Activated T-helper 2 cell treated with anti-CD3 and anti-CD28 coated beads, Interferon-gamma antibody, Interleukin-2, Interleukin-4, amounts not matched to agents 10 μg/mL and 5 μg/mL and 100 μg/mL, durations not matched to agents 14 hours and 24 hours and 36 hours (primary cell): ENCODE measurements at regions of chr15 and their contacts with region 1.

Region 1: DNA sequence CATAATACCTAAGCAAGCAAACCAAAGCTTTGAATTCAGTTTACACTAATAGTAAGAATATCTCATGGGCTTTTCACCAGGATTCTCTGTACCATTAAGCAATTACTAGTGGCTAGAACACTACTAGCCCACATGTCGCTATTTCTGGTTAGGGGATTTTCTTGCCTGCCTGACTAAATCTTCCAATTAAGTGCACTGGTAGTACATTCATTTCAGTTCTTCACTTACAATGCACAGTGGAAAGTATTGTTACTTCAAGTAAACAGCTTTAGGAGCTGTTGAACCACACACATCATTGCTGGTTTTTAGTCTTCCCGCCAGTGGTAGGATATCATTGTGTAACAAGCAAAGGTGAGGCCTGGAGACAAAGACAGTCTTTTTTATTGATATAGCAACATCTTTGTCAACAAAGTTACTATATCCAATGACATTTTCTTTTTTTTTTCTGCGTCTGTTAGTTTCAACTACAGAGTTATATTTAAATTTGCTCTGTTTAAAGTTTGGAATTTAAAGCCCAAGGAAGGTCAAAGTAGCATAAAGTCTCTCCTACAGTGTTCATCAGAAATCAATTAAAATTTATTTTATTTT is 826.8 kb upstream of the NR2F2 start:
- DNase-seq: no peak
- H3K4me3 Mint-ChIP-seq: no peak overlapping the region
- H3K27ac Mint-ChIP-seq: no peak overlapping the region
- H3K4me1 Mint-ChIP-seq: peaks cover 21% of the 10 kb centered on the region
- H3K27me3 Mint-ChIP-seq: no peaks in the 10 kb centered on the region

Region 2: DNA sequence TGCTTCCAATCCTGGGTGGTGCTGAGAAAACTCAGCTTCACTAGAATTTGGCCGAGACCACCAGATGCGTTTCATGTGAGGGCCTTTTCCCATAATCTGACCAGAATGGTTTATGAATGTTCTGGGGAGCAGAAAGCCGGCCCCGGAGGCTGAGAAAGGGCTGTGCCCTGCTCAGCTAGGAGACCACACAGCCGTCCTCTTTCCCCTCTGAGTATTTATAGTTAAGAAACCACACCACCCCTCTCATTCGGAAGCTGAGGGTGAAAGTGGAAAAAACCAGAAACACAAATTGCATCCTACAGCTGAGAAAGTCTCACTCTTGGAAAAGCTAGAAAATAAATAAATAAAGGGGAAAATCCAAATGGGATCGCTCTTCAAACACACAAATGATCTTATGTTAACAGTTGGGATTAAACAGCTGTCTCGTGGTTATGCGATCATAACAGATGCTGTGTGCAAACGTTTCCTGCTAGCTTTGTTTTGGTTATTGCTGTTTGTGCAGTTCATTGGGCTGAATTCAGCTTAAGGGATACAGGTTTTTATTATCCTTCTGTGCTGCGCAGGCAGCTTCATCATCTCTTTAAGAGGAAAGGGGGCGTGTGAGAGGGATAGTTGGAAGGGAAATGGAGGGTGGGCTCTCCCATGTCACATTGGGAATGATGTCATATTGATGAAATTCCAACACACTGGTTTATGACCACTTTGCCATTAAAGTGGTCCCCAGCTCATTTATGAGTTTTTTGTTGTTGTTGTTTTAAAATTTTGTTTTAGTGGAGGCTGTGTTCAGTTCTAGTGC is 199.4 kb before region 1 on chr15:
- intact Hi-C with region 1: loop called (anchors 5 kb)
- DNase-seq: no peak
- H3K4me3 Mint-ChIP-seq: peak overlapping the region; percentile 19
- H3K27ac Mint-ChIP-seq: no peak overlapping the region
- H3K4me1 Mint-ChIP-seq: peaks cover 30% of the 10 kb centered on the region
- H3K27me3 Mint-ChIP-seq: peaks cover 40% of the 10 kb centered on the region

Region 3: GRCh38 chr15:95446854-95447253 is 56.9 kb before region 1 on chr15:
- intact Hi-C with region 1: loop called (anchors 5 kb)
- DNase-seq: peak; percentile 33
- H3K4me3 Mint-ChIP-seq: peak overlapping the region; percentile 4
- H3K27ac Mint-ChIP-seq: peak overlapping the region; percentile 64
- H3K4me1 Mint-ChIP-seq: peaks cover 30% of the 10 kb centered on the region
- H3K27me3 Mint-ChIP-seq: no peaks in the 10 kb centered on the region

Region 4: DNA sequence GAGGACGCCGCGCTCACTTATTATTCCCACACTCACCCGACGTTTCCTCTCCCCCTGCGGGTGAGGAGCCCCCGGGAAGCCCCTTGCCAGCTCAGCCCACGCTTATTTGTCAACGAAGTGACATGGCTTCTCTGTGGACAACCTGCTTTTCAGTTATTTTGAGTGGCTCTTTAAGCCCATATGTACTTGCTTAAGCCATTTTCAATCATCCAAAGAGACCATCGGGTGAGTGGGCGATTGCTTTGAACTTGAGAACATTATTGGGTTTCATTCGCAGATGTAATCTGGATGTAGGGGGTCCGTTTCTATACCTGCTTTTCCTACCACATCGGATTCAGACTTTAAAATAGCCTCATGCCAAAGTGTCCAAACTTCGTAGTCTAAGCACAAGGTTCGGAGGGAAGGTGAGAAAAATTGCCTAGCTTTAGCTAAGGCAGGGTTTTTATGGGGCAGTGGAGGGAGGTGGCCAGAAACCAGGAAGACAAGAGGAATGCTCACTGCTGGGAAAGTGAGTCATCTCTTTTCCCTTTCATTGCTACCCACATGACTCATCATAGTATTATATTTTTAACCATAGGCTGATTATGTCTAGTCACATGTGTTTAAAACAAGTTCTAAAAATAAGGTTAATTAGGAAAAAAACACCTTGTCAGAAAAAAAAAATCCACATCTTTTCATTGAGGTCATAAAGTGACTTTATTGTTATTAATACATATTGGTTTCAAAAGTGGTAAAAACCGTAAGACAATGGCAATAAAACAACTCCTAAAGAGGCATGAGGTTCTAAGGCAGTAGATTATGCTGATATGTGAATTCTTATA is 53.7 kb after region 1 on chr15:
- intact Hi-C with region 1: loop called (anchors 5 kb)
- DNase-seq: no peak
- H3K4me3 Mint-ChIP-seq: no peak overlapping the region
- H3K27ac Mint-ChIP-seq: no peak overlapping the region
- H3K4me1 Mint-ChIP-seq: peaks cover 9% of the 10 kb centered on the region
- H3K27me3 Mint-ChIP-seq: peaks cover 10% of the 10 kb centered on the region